Activated naive CD4-positive, alpha-beta T cell treated with anti-CD3 and anti-CD28 coated beads, Interleukin-2, amount 10 ng/mL, durations not matched to agents 7 days and 5 days (primary cell): ENCODE measurements at regions of chr1 and their contacts with region 1.

Region 1: GRCh38 chr1:42924082-42924850 is 34.4 kb downstream of the SLC2A1 start:
- DNase-seq: peak; percentile 95
- H3K4me3 Mint-ChIP-seq: peak overlapping the region; percentile 77
- H3K27ac Mint-ChIP-seq: peak overlapping the region; percentile 89
- H3K4me1 Mint-ChIP-seq: peaks cover 57% of the 10 kb centered on the region
- H3K27me3 Mint-ChIP-seq: no peaks in the 10 kb centered on the region

Region 2: GRCh38 chr1:42766741-42767509 is 157.3 kb before region 1 on chr1 and contains the starts of genes C1orf50 and P3H1:
- CTCF ChIA-PET with region 1: interaction called, 11 read pairs
- DNase-seq: peak; percentile 100
- H3K4me3 Mint-ChIP-seq: no peak within 1 kb of the TSS
- H3K27ac Mint-ChIP-seq: peak within 1 kb of the TSS; percentile 93
- H3K4me1 Mint-ChIP-seq: peaks cover 40% of the 10 kb centered on the region
- H3K27me3 Mint-ChIP-seq: no peaks in the 10 kb centered on the region

Region 3: DNA sequence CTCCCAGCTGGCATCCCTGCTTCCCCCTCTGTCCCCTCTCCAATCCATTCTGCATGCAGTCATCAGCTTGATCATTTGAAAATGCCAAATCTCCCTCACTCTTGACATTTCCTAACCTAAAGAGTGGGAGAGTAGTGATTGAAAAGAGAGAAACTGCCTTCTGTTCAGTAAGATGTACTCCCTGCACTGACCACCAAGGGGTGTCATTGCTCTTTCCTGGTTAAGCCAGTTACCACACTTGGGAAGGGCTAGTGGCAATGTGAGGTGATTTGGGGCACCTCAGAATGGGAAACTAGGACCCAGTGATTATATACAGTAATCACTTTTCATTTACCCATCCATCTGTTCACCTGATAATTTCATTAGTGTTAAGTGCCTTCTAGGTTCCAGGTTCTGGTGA is 146.4 kb before region 1 on chr1:
- CTCF ChIA-PET with region 1: interaction called, 26 read pairs
- DNase-seq: peak; percentile 59
- H3K4me3 Mint-ChIP-seq: no peak overlapping the region
- H3K27ac Mint-ChIP-seq: no peak overlapping the region
- H3K4me1 Mint-ChIP-seq: peaks cover 17% of the 10 kb centered on the region
- H3K27me3 Mint-ChIP-seq: no peaks in the 10 kb centered on the region

Region 4: DNA sequence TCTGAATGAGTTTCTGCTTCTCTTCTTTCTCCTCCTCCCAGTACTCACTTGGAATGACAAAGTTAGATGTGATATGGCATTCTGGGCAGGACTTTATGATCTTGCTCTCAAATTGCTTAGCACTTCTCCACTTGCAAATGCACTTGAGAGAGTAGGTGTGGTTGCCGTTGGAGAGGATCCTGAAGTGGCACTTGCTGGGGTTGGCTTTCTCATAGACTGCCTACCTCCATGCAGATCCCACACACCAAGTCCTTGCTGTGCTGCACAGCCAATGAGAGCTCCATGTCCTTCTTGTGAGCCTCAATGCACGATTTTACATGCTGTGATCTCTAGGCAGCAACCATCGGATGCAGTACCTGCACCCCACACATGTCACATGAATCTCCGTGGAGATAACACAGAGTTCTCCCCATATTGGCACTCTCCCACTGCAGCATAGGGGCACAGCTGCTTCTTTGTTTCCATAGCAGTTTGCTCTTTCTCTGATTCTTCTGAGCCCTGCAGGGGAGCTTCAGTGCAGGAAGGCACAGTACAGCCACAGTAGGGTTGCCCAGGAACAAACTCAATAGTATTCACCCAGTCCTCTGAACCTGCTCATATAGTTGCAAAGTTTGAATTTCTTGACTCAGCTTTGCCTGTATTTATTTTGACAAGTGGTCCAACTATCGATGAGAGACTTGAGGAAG is 32.7 kb before region 1 on chr1:
- CTCF ChIA-PET with region 1: no interaction called
- DNase-seq: no peak
- H3K4me3 Mint-ChIP-seq: no peak overlapping the region
- H3K27ac Mint-ChIP-seq: no peak overlapping the region
- H3K4me1 Mint-ChIP-seq: no peaks in the 10 kb centered on the region
- H3K27me3 Mint-ChIP-seq: peaks cover 11% of the 10 kb centered on the region

Region 5: GRCh38 chr1:42913426-42914091 is 10.7 kb before region 1 on chr1:
- CTCF ChIA-PET with region 1: interaction called, 41 read pairs
- DNase-seq: peak; percentile 71
- H3K4me3 Mint-ChIP-seq: no peak overlapping the region
- H3K27ac Mint-ChIP-seq: no peak overlapping the region
- H3K4me1 Mint-ChIP-seq: peaks cover 5% of the 10 kb centered on the region
- H3K27me3 Mint-ChIP-seq: peaks cover 35% of the 10 kb centered on the region

Region 6: DNA sequence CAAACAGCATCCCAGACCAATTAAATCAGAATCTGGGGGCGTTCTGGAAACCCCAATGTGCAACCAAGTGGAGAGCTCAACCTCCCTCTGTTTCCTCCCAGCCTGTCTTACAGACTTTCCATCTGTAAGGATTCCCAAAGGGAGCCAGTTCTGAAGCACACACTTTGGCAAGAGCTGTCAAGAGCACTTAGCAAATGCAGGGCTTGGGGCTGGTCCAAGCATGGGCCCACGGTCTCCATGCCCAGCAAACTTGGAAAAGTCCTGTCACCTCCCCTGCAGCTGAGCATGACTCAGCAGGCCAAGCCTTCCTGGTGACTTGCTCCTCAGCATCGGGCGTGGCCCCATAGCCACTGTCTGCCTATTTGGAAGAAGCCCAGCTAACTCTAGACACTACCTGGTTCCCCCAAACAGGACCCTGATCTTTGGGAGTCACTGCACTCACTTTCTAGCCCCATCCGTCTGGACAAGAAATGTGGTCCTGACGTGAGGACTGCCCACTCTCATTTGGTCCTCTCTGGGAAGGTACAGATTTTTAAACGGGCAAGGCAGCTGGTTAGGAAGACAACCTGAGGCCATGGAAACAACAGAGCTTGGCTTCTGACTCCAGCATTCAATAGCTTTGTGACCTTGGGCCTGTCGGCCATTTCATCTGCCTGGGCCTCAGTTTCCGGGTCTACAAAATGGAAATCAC is 17.5 kb after region 1 on chr1:
- CTCF ChIA-PET with region 1: interaction called, 12 read pairs
- DNase-seq: no peak
- H3K4me3 Mint-ChIP-seq: no peak overlapping the region
- H3K27ac Mint-ChIP-seq: peak overlapping the region; percentile 89
- H3K4me1 Mint-ChIP-seq: peaks cover 99% of the 10 kb centered on the region
- H3K27me3 Mint-ChIP-seq: no peaks in the 10 kb centered on the region

Region 7: DNA sequence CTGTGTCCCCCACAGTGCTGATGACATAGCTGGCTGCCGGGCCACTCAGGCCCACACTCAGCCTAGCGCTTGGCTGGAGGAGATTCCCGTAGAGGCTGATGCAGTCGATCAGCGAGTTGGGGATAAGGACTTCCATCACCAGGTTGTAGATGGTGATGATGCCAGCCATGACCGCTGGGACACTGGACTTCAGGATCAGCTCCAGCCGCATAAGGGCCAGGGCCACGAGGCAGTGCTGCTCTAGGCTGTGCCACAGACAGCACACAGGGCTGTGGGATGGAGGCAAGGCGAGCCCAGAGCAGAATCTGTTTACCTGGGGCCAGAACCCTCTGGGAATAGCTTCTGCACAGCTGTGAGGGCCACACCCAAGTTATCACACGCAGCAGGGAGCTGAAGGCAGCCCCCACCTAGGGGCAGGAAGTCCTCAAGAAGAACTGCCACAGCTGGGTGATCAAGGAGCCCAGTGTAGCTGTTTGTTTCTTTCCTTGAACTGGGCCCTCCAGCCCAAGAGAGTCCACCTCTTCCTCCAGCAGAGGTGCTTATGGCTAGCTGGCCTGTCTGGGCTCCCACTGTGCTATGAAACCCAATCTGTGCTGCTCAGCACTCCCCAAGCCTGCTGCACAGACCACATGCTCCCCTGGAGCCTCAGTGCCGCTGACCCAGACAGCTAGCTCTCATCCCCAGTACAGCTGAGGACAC is 28.2 kb after region 1 on chr1:
- CTCF ChIA-PET with region 1: interaction called, 10 read pairs
- DNase-seq: peak; percentile 71
- H3K4me3 Mint-ChIP-seq: peak overlapping the region; percentile 21
- H3K27ac Mint-ChIP-seq: peak overlapping the region; percentile 89
- H3K4me1 Mint-ChIP-seq: peaks cover 90% of the 10 kb centered on the region
- H3K27me3 Mint-ChIP-seq: no peaks in the 10 kb centered on the region

Region 8: GRCh38 chr1:43065191-43065590 is 140.9 kb after region 1 on chr1:
- CTCF ChIA-PET with region 1: interaction called, 128 read pairs
- DNase-seq: no peak
- H3K4me3 Mint-ChIP-seq: no peak overlapping the region
- H3K27ac Mint-ChIP-seq: no peak overlapping the region
- H3K4me1 Mint-ChIP-seq: peaks cover 13% of the 10 kb centered on the region
- H3K27me3 Mint-ChIP-seq: peaks cover 11% of the 10 kb centered on the region

Region 9: GRCh38 chr1:43206600-43207228 is 282.4 kb after region 1 on chr1:
- CTCF ChIA-PET with region 1: no interaction called
- DNase-seq: no peak
- H3K4me3 Mint-ChIP-seq: no peak overlapping the region
- H3K27ac Mint-ChIP-seq: no peak overlapping the region
- H3K4me1 Mint-ChIP-seq: peaks cover 2% of the 10 kb centered on the region
- H3K27me3 Mint-ChIP-seq: peaks cover 5% of the 10 kb centered on the region

Region 10: GRCh38 chr1:43220905-43221778 is 296.9 kb after region 1 on chr1:
- CTCF ChIA-PET with region 1: no interaction called
- DNase-seq: no peak
- H3K4me3 Mint-ChIP-seq: no peak overlapping the region
- H3K27ac Mint-ChIP-seq: no peak overlapping the region
- H3K4me1 Mint-ChIP-seq: peaks cover 2% of the 10 kb centered on the region
- H3K27me3 Mint-ChIP-seq: peaks cover 20% of the 10 kb centered on the region